HCT116 (cell line): ENCODE measurements at regions of chr16 and their contacts with region 1.

Region 1: GRCh38 chr16:67883872-67884261 is 818 bp upstream of the NRN1L start:
- DNase-seq: peak; percentile 29
- ATAC-seq: peak; percentile 91
- H3K4me3 ChIP-seq: no peak overlapping the region
- H3K27ac ChIP-seq: no peak overlapping the region
- H3K4me1 ChIP-seq: no peaks in the 10 kb centered on the region
- H3K27me3 ChIP-seq: no peaks in the 10 kb centered on the region
- CTCF ChIP-seq: peak; percentile 85 to 92 (median 91)
- POLR2A ChIP-seq: no peak
- RAD21 ChIP-seq: peak; percentile 76

Region 2: DNA sequence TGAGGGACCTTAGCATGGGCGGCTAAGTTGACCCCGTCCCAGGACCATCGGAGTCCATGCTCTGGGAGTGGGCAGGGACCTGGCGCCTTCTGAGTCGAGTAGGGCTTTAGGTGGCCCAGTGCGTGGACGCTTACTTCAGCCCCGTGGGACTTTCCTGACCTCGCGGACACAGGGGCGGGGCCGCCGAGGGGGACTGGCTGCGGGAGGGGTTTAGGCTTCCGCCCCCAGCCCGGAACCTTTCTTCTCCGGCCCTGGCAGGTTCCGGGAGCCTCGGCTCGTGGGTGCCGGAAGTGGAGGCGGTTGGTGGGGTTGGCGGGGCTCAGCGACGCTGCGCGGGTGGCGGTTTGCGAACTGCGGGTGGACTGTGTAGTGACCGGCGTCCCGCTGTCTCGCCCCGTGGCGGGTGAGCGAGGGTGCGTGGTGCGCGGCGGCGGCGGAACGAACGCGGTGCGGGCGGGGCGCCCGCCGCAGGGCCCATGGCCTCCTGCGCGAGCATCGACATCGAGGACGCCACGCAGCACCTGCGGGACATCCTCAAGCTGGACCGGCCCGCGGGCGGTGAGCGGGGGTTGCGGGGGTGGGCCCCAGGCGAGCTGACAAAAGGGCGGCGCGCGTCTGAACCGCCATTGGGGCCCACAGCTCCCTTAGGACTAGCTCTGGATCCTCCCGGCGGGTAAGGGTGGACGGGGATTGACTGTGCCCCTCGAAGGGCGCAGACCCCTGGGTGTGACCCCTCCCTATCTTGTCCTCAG is 10.9 kb before region 1 on chr16 and contains the start of gene EDC4:
- CTCF ChIA-PET with region 1: interaction called, 12 read pairs
- POLR2A ChIA-PET with region 1: no interaction called
- RAD21 ChIA-PET with region 1: no interaction called
- intact Hi-C with region 1: no loop called
- DNase-seq: peak; percentile 52
- ATAC-seq: peak; percentile 90
- H3K4me3 ChIP-seq: peak within 1 kb of the TSS; percentile 82 to 97
- H3K27ac ChIP-seq: peak within 1 kb of the TSS; percentile 70
- H3K4me1 ChIP-seq: peaks cover 7 to 17% of the 10 kb centered on the region in 2 experiments
- H3K27me3 ChIP-seq: no peaks in the 10 kb centered on the region
- CTCF ChIP-seq: no peak
- POLR2A ChIP-seq: no peak
- RAD21 ChIP-seq: no peak
- total RNA-seq, gene EDC4: 100 TPM

Region 3: GRCh38 chr16:67928561-67929364 is 44.9 kb after region 1 on chr16:
- CTCF ChIA-PET with region 1: interaction called, 5 read pairs
- POLR2A ChIA-PET with region 1: no interaction called
- RAD21 ChIA-PET with region 1: no interaction called
- intact Hi-C with region 1: loop called (anchors 1 kb)
- DNase-seq: peak; percentile 24
- ATAC-seq: peak; percentile 88
- H3K4me3 ChIP-seq: no peak overlapping the region
- H3K27ac ChIP-seq: no peak overlapping the region
- H3K4me1 ChIP-seq: no peaks in the 10 kb centered on the region; a peak in 1 of 4 replicates
- H3K27me3 ChIP-seq: no peaks in the 10 kb centered on the region
- CTCF ChIP-seq: peak; percentile 95 to 98 (median 96)
- POLR2A ChIP-seq: no peak
- RAD21 ChIP-seq: peak; percentile 94

Region 4: GRCh38 chr16:67935402-67936123 is 51.7 kb after region 1 on chr16:
- CTCF ChIA-PET with region 1: interaction called, 11 read pairs
- POLR2A ChIA-PET with region 1: no interaction called
- RAD21 ChIA-PET with region 1: interaction called in 1 of 2 experiments, 4 read pairs
- intact Hi-C with region 1: no loop called
- DNase-seq: peak; percentile 93
- ATAC-seq: peak; percentile 95
- H3K4me3 ChIP-seq: peak overlapping the region; percentile 70 to 82
- H3K27ac ChIP-seq: peak overlapping the region; percentile 83
- H3K4me1 ChIP-seq: peaks cover 3 to 30% of the 10 kb centered on the region in 2 experiments; a peak in 3 of 4 replicates
- H3K27me3 ChIP-seq: no peaks in the 10 kb centered on the region
- CTCF ChIP-seq: no peak
- POLR2A ChIP-seq: peak; percentile 67
- RAD21 ChIP-seq: no peak

Region 5: GRCh38 chr16:68040507-68041288 is 156.8 kb after region 1 on chr16:
- CTCF ChIA-PET with region 1: interaction called, 13 read pairs
- POLR2A ChIA-PET with region 1: no interaction called
- RAD21 ChIA-PET with region 1: no interaction called
- intact Hi-C with region 1: loop called (anchors 1 kb)
- DNase-seq: peak; percentile 63
- ATAC-seq: peak; percentile 99
- H3K4me3 ChIP-seq: no peak overlapping the region
- H3K27ac ChIP-seq: no peak overlapping the region
- H3K4me1 ChIP-seq: peaks cover 4 to 5% of the 10 kb centered on the region in 2 experiments; a peak in 1 of 4 replicates
- H3K27me3 ChIP-seq: no peaks in the 10 kb centered on the region
- CTCF ChIP-seq: peak; percentile 90 to 96 (median 93)
- POLR2A ChIP-seq: no peak
- RAD21 ChIP-seq: peak; percentile 95

Region 6: DNA sequence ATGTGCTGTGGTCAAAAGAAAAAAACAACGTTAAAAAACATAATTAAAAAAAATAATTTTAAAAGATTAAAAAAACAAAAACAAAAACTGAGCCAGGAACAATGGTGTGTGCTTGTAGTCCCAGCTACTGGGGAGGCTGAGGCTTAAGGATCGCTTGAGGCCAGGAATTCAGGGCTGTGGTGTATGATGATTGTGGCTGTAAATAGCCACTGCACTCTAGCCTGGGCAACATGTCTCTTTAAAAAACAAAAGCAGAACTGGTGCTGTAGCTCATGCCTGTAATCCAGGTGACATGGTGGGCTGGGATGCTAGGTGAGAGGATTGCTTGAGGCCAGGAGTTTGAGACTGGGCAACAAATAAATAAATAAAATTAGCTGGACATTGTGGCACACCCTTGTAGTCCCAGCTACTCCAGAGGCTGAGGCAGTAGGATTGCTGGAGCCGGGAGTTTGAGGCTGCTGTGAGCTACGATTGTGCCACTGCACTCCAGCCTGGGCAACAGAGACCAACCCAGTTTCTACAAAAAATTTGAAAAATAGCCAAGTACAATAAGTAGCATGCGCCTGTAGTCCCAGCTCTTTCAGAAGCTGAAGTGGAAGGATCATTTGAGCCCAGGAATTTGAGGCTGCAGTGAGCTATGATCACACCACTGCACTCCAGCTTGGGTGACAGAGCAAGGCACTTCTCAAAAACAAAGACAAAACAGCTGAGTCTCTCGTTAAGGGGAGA is 244.9 kb after region 1 on chr16:
- CTCF ChIA-PET with region 1: no interaction called
- POLR2A ChIA-PET with region 1: no interaction called
- RAD21 ChIA-PET with region 1: no interaction called
- intact Hi-C with region 1: no loop called
- DNase-seq: no peak
- ATAC-seq: no peak
- H3K4me3 ChIP-seq: no peak overlapping the region
- H3K27ac ChIP-seq: no peak overlapping the region
- H3K4me1 ChIP-seq: peaks cover 7 to 10% of the 10 kb centered on the region in 2 experiments; a peak in 2 of 4 replicates
- H3K27me3 ChIP-seq: no peaks in the 10 kb centered on the region
- CTCF ChIP-seq: no peak
- POLR2A ChIP-seq: no peak
- RAD21 ChIP-seq: no peak